ENCODE measurements at regions of chr1 and their contacts with region 1.

Region 1: DNA sequence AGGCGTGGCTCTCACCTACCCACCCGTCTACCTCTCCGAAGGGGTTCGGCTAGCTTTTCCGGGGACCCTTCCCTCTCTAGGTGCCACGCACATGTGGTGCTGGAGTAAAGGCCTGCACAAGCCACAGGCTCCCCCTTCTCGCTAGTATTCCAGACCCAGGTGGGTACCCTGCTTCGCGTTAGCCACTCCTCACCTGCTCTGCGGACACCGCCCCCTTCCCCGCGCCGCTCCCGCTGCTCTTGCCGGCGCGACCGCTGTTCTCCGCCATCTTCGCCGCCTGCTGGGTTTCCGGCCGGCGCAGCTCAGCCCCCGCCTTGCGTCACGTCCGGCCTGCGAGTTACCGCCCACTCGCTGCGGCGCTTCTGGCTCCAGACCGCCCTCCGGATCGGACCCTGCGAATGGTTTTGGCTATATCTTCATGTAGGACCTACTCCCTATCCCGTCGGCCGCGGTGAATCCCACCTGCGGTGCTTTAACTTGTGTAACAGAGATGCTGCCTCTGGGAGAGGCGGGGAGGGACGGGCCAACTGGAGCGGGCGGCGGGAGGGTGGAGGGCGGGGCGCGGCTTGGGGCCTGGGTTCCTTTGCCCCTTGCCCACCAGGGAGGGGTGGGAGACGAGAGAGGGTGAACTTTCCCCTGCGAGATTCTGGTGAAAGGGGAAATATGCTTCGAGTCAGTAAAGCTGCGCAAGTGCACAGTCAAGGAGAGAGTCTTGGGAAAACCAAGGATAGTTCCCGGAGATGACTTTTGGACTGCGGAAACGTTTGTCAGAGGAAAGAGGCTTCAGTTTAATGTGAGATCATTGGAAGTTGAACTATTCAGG is at the starts of genes NIT1 and PFDN2:
- DNase-seq: peak; percentile 94
- H3K4me3 ChIP-seq: peak within 1 kb of the TSS; percentile 79 to 92
- H3K27ac ChIP-seq: peak within 1 kb of the TSS; percentile 90 to 93
- H3K4me1 ChIP-seq: peaks cover 22 to 25% of the 10 kb centered on the region in 2 experiments; a peak in 3 of 4 replicates
- H3K27me3 ChIP-seq: no peaks in the 10 kb centered on the region
- CTCF ChIP-seq: no peak
- EP300 ChIP-seq: no peak
- RAD21 ChIP-seq: no peak
- polyA plus RNA-seq, gene NIT1: 38.7 and 48.9 TPM in 2 replicates
- polyA plus RNA-seq, gene PFDN2: 340 and 445 TPM in 2 replicates

Region 2: DNA sequence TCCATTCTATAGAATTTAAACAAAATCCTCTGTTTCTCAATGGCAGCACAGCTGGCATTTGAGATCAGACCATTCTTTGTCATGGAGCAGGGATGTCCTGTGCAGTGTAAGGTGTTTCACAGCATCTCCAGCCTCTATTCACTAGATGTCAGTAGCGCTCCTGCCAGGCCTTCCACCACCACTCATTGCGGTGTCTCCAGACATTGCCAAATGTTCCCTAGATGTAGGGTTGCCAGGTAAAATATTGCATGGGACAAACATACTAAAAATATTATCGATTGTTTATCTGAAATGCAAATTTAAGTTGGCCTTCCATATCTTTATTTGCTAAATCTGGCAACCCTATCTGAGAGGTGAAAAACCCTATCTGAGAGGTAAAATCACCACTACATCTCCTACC is 175.0 kb before region 1 on chr1:
- CTCF ChIA-PET with region 1: no interaction called
- POLR2A ChIA-PET with region 1: no interaction called
- DNase-seq: no peak
- H3K4me3 ChIP-seq: no peak overlapping the region
- H3K27ac ChIP-seq: no peak overlapping the region
- H3K4me1 ChIP-seq: no peaks in the 10 kb centered on the region
- H3K27me3 ChIP-seq: peaks cover 36% of the 10 kb centered on the region
- CTCF ChIP-seq: no peak
- EP300 ChIP-seq: no peak
- RAD21 ChIP-seq: peak; percentile 19; the same call in 1 of the 2 replicates

Region 3: GRCh38 chr1:161045750-161046571 is 72.0 kb before region 1 on chr1 and contains the start of gene USF1:
- CTCF ChIA-PET with region 1: no interaction called
- POLR2A ChIA-PET with region 1: interaction called, 12 read pairs
- DNase-seq: peak; percentile 93
- H3K4me3 ChIP-seq: peak within 1 kb of the TSS; percentile 69 to 75
- H3K27ac ChIP-seq: peak within 1 kb of the TSS; percentile 93 to 99
- H3K4me1 ChIP-seq: peaks cover 0 to 7% of the 10 kb centered on the region in 2 experiments; a peak in 2 of 4 replicates
- H3K27me3 ChIP-seq: no peaks in the 10 kb centered on the region
- CTCF ChIP-seq: no peak
- EP300 ChIP-seq: no peak
- RAD21 ChIP-seq: no peak
- polyA plus RNA-seq, gene USF1: 43.1 and 61.9 TPM in 2 replicates

Measured in SK-N-SH (cell line).